Activated T-helper 1 cell treated with anti-CD3 and anti-CD28 coated beads, Interleukin-12 subunit alpha, Interleukin-12 subunit beta, Interleukin-2, Interleukin-4 antibody, amounts not matched to agents 30 ng/mL and 10 ng/mL and 1 ng/mL, durations not matched to agents 14 hours and 24 hours and 36 hours (primary cell): ENCODE measurements at regions of chr11 and their contacts with region 1.

Region 1: DNA sequence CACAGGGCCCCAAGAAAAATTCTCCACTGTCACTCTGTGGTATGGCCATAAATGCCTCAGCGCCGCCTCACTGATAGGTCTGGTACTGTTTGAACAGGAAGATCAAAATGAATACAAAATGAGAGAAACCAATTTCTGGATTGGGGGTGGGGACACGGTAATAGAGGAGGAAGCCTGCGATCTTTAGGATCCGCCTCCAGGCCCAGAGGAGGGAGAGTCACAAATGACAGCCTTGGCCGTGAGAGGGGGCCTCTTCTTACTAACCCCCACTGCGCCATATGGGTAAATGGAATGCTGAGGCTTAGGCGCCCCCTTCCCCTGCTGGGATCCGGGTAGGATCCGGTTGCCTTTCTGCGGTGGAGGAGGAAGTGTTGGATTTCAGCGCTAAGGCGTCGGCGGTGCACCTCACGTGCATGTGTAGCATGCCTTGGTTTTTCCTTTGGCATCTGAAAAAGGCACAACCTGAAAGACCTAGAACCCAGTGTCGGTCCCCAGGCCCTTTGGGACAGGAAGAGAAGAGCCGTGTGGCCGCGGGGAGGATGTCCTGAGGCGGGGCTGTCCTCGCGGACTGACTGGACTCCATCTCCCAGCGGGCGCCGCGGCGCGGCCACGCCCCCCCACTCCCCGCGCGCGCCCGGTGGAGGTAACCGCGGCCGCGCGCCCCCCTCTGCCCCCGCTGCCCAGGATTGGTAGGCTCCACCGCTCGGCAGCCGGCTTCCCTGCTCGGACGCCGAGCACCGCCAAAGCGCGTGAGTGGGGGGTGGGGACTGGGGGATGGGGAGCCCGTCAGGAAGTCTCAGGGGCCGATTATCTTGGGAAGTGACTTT is 718 bp upstream of the MADD start:
- DNase-seq: peak; percentile 73
- H3K4me3 Mint-ChIP-seq: peak overlapping the region; percentile 81
- H3K27ac Mint-ChIP-seq: peak overlapping the region; percentile 92
- H3K4me1 Mint-ChIP-seq: peaks cover 54% of the 10 kb centered on the region
- H3K27me3 Mint-ChIP-seq: no peaks in the 10 kb centered on the region

Region 2: DNA sequence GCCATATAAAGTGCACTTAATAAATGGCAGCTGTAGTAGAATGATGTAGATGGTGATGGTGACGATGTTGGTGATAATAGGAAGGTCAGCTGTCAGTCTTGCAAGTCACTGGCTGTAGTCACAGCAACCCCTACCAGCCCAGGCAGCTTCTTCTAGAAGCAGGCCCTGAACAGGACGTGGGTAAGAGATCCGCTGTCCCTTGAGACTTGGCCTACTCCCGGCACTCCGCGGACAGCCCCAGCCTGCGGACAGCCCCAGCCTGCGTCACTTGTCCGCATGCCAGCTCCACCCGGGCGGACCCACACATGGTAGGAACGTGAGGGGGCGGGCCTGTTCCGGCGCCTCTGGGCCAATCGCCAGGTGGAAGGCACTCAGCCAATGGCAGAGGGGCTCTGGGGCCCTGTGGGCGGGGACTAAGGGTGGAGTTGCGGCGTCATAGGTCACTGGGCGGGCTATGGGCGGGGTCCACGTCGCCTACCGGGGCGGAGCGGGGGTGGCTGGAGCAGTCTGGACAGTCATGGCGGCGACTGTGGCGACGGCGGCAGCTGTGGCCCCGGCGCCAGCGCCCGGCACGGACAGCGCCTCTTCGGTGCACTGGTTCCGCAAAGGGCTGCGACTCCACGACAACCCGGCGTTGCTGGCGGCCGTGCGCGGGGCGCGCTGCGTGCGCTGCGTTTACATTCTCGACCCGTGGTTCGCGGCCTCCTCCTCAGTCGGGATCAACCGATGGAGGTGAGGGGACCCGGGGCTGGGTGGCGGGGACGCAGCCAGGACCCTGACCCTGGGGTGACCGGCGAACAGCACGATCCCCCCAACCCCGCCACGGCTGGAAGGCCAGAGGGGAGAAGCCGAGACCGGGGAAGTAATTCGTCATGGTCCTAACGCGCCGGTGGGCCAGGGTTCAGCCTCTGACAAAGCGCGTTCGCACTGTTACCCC is 1422.0 kb before region 1 on chr11 and contains the start of gene CRY2:
- intact Hi-C with region 1: loop called (anchors 5 kb)
- DNase-seq: peak; percentile 97
- H3K4me3 Mint-ChIP-seq: peak within 1 kb of the TSS; percentile 86
- H3K27ac Mint-ChIP-seq: peak within 1 kb of the TSS; percentile 94
- H3K4me1 Mint-ChIP-seq: peaks cover 44% of the 10 kb centered on the region
- H3K27me3 Mint-ChIP-seq: peaks cover 9% of the 10 kb centered on the region
- total RNA-seq, gene CRY2: 19.4 and 23.7 TPM in 2 replicates

Region 3: DNA sequence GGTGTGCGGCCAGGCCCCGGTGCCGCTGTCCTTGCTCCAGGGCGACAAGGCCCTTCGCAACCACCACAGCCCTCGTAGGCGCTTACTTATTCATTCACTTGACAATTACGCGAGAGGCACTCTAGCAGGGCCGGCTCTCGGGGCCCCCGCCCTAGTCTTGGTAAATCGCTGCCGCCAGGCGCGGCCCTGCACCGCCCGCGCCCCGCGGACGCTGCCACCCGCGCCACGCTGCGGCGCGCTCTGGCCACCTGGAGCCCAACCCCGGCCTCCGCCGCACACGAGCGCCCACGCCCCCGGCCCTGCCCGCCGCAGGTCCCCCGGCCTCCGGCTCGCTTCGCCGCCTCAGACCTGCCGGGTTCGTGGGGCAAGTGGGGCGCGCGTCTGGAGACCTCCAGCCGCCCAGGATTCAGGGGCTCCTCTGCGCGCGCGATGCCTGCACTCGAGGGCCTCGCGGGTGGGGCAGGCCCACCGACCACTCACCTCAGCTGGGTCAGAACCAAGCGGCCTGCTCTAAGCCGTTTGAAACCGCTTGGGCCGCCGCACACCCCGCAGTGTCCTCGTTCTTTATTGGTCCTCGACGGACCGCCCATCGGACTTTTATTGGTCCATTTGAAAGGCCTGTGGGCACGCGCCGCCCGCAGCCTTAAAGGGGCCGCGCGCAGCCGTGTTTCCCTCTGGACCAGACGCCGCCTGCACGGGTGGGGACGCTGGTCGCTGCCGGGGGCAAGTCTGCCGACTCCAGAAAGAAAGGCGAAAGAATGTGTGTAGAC is 423.3 kb before region 1 on chr11 and contains the start of gene CKAP5:
- intact Hi-C with region 1: loop called (anchors 2 kb)
- DNase-seq: peak; percentile 87
- H3K4me3 Mint-ChIP-seq: peak within 1 kb of the TSS; percentile 98
- H3K27ac Mint-ChIP-seq: peak within 1 kb of the TSS; percentile 98
- H3K4me1 Mint-ChIP-seq: peaks cover 41% of the 10 kb centered on the region
- H3K27me3 Mint-ChIP-seq: peaks cover 4% of the 10 kb centered on the region
- total RNA-seq, gene CKAP5: 121 TPM in 2 replicates

Region 4: DNA sequence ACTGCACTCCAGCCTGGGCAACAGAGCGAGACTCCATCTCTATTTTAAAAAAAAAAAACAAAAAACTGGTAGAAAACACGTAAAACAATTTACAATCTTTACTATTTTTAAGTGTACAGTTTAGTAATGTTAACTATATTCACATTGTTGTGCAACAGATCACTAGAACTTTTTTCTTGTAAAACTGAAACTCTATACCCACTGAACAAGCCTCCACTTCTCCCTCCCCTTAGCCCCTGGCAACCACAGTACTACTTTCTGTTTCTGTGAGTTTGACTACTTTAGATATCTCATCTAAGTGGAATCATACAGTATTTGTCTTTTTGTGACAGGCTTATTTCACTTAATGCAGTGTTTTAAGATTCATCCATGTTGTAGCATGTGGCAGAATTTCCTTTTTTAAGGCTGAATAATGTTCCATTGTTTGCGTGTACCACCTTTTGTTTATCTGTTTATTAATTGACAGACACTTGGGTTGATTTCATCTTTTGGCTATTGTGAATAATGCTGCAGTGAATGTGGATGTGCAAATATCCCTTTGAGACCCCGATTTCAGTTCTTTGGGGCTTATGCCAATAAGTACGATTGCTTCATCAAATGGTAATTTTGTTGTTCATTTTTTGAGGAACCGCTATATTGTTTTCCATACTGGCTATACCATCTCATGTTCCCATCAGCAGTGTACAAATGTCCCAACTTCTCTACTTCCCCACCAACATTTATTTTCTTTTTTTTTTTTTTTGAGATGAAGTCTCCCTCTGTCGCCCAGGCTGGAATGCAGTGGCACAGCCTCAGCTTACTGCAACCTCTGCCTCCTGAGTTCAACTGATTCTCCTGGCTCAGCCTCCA is 43.4 kb before region 1 on chr11:
- intact Hi-C with region 1: loop called (anchors 1 kb)
- DNase-seq: no peak
- H3K4me3 Mint-ChIP-seq: peak overlapping the region; percentile 38
- H3K27ac Mint-ChIP-seq: peak overlapping the region; percentile 64
- H3K4me1 Mint-ChIP-seq: peaks cover 27% of the 10 kb centered on the region
- H3K27me3 Mint-ChIP-seq: no peaks in the 10 kb centered on the region

Region 5: DNA sequence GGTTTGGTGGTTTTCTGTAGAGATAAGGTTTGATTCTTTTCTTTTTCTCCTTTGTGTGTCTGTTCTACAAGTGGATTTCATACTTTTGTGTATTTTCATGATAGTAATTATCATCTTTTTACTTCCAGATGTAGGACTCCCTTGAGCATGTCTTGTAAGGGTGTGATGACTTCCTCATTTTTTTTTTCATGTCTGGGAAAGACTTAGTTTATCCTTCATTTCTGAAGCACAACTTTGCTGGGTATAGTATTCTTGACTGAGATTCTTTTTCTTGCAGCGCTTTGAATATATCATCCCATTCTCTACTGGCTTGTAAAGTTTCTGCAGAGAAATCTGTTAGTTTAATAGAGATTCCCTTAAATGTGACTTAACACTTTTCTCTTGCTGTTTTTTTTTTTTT is 33.6 kb after region 1 on chr11:
- intact Hi-C with region 1: loop called (anchors 2 kb)
- DNase-seq: no peak
- H3K4me3 Mint-ChIP-seq: no peak overlapping the region
- H3K27ac Mint-ChIP-seq: peak overlapping the region; percentile 73
- H3K4me1 Mint-ChIP-seq: peaks cover 10% of the 10 kb centered on the region
- H3K27me3 Mint-ChIP-seq: no peaks in the 10 kb centered on the region

Region 6: DNA sequence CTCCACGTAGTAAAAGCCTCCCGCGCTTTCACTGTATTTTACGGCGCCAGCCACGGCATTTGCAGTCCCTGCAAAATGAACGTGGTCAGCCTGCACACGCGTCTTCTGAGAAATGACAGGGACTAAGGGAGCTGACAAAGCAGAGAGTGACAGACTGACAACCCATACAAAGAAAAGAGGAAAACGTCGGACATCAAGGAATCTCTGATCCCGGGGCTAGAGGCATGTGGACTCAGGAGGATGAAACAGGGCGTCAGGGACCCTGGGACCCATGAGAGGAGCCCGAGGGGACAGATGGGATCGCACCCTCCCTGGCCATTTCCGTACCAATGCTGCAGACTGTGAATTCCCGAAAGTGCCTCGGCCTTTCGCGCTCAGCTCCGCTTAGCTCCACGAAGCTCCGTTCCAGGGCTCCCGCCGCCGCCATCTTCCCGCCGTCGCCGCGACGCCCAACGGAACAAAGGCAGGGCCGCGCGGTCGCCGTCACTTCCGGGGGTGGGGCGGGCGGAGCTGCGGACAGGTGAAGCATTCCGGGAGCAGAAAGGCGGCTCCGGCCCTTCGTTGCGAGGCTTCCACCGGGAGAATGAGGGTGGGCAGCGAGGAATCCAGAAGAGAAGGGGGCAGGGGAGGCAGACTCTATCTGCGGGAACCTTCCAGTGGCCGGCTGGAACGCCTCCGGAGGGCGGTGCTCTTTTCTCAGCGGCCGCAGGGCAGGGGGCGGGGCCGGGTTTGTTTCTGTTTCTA is 578.8 kb after region 1 on chr11 and contains the start of gene NUP160:
- intact Hi-C with region 1: loop called (anchors 1 kb)
- DNase-seq: peak; percentile 86
- H3K4me3 Mint-ChIP-seq: peak within 1 kb of the TSS; percentile 98
- H3K27ac Mint-ChIP-seq: peak within 1 kb of the TSS; percentile 100
- H3K4me1 Mint-ChIP-seq: peaks cover 47% of the 10 kb centered on the region
- H3K27me3 Mint-ChIP-seq: no peaks in the 10 kb centered on the region
- total RNA-seq, gene NUP160: 91.9 and 98.6 TPM in 2 replicates